ENCODE measurements at regions of chr11 and their contacts with region 1.

Region 1: DNA sequence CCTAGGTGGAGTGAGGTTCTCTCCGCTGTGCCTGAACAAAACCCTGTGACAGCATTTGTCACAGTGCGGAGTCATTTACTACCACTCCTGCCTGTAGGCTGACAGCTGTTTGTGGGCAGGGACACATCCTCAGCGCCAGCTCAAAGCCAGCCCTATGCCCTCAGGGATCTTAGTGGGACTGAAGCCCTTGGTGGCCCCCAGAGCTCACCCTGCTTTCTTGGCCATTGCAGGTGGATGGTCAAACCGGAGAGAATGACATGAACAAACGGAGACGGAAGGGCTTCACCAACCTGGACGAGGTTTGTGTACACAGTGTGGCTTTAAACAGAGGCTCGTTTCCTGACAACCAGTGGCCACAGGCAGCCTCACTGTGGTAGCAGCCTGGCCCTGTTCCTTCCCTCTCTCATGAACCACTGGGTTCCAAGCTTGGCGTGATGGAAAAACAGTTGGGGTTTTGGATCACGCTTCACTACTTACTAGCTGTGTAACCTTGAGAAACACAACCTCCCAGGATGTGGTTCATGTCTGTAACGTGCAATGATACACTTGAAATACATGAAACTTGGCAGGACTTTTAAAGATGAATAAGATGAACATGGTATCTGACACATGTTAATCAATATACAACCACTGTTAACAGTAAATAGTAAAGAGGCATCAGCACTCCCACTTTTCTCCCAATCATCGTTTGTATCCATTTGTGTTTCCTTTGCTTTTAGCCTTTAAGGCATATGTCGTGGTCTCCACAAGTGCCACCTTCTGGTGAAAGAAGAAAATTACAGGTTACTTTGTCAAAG is 125.8 kb downstream of the MICAL2 start:
- DNase-seq: no peak
- H3K4me3 ChIP-seq: no peak overlapping the region
- H3K27ac ChIP-seq: peak overlapping the region in 2 of 3 donors; percentile 41 to 94
- H3K4me1 ChIP-seq: peaks cover 48 to 49% of the 10 kb centered on the region in 2 donors
- H3K27me3 ChIP-seq: no peaks in the 10 kb centered on the region
- CTCF ChIP-seq: peak; percentile 22 to 81 (median 66)
- POLR2A ChIP-seq: peak in 1 of 2 donors; percentile 52

Region 2: DNA sequence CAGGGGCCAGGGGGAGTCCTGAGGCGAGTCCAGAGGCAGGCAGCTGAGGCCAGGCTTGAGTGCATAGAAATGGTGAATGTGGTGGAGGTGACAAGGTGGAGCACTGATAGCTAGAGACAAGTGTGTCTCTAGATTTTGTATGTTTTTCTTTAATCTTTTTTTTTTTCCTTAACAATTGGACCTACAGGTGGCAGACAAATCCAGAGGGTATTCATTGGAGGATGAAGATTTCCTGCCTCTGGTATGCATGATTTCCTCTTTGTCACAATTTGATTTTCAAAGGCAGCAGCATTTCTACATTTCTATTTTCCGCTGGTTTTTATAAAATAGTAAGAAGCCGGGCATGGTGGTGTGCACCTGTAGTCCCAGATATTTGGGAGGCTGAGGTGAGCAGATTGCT is 180.0 kb before region 1 on chr11:
- intact Hi-C with region 1: loop called (anchors 5 kb)
- DNase-seq: no peak
- H3K4me3 ChIP-seq: no peak overlapping the region
- H3K27ac ChIP-seq: no peak overlapping the region
- H3K4me1 ChIP-seq: peaks cover 0 to 6% of the 10 kb centered on the region in 2 donors
- H3K27me3 ChIP-seq: no peaks in the 10 kb centered on the region
- CTCF ChIP-seq: no peak
- POLR2A ChIP-seq: no peak

Region 3: DNA sequence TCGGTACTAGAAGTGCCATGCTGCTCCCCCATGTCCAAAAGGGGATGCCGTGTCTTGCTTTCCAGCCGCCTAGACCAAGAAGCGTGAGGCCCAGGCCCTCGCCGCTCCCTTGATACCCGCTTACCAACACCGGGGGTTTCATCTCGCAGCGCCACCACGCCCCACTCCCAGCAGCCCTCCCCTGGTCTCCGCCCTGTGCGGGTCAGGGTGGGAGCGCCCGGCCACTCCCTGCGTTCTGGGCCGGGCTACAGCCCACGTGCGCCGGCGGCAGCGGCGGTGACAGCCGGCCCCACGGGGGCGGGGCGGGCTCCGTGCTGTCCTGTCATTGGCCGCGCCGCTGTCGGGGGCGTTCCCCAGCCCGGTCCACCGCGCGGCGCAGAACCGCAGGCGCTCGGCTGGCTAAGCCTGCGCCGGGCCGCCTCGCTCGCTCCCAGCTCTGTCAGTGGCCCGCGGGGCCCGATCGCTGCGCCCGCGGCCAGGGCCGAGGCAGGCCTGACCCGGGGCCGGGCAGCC is 125.9 kb before region 1 on chr11 and contains the start of gene MICAL2:
- intact Hi-C with region 1: loop called (anchors 10 kb)
- DNase-seq: peak; percentile 90 to 91
- H3K4me3 ChIP-seq: peak within 1 kb of the TSS; percentile 57 to 71 (median 67)
- H3K27ac ChIP-seq: peak within 1 kb of the TSS; percentile 53 to 80 (median 71)
- H3K4me1 ChIP-seq: peaks cover 11 to 21% of the 10 kb centered on the region in 2 donors
- H3K27me3 ChIP-seq: no peaks in the 10 kb centered on the region
- CTCF ChIP-seq: no peak
- POLR2A ChIP-seq: peak in 1 of 2 donors; percentile 97
- total RNA-seq, gene MICAL2: 27.4 to 63.6 (median 51.9) TPM

Region 4: DNA sequence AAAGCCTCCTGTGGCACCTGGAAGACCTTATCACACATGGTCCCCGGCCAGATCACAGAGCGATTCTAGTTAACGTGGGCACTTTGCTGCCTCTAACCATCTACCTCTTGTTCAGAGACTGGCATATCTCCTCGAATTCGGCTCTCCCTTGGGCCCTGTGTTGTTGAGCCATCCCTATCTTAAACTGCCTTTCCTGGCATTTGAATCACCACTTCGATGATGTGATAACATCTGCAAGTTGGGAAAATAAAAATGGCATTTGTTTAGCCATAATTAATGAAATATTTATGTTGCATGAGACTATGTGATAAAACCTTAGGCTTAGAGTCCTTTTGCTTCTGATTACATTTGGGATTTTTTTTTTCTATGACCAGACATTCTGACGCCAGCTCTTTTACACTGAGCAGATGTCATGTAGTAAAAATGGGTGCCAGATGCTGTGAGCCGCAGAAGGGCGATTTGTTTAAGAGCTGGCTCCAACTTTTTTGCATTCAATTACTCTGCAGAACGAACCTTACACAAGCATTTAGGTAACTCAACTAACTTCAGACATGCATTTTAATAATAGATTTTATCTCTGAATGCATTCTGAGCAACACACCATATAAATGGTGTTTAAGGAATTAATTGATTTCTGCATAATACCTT is 82.8 kb after region 1 on chr11:
- intact Hi-C with region 1: no loop called
- DNase-seq: no peak
- H3K4me3 ChIP-seq: no peak overlapping the region
- H3K27ac ChIP-seq: no peak overlapping the region
- H3K4me1 ChIP-seq: no peaks in the 10 kb centered on the region
- H3K27me3 ChIP-seq: no peaks in the 10 kb centered on the region
- CTCF ChIP-seq: no peak
- POLR2A ChIP-seq: no peak